Transverse colon (tissue), 4 donors: ENCODE measurements at regions of chr18 and their contacts with region 1.

Region 1: GRCh38 chr18:57859314-57859713 is 56.2 kb upstream of the ATP8B1 start:
- DNase-seq: peak; percentile 39
- H3K4me3 ChIP-seq: no peak overlapping the region
- H3K27ac ChIP-seq: no peak overlapping the region
- H3K4me1 ChIP-seq: peaks cover 0 to 5% (median 3%) of the 10 kb centered on the region in 4 donors
- H3K27me3 ChIP-seq: no peaks in the 10 kb centered on the region
- CTCF ChIP-seq: peak; percentile 19 to 58 (median 48)
- EP300 ChIP-seq: no peak
- POLR2A ChIP-seq: no peak

Region 2: DNA sequence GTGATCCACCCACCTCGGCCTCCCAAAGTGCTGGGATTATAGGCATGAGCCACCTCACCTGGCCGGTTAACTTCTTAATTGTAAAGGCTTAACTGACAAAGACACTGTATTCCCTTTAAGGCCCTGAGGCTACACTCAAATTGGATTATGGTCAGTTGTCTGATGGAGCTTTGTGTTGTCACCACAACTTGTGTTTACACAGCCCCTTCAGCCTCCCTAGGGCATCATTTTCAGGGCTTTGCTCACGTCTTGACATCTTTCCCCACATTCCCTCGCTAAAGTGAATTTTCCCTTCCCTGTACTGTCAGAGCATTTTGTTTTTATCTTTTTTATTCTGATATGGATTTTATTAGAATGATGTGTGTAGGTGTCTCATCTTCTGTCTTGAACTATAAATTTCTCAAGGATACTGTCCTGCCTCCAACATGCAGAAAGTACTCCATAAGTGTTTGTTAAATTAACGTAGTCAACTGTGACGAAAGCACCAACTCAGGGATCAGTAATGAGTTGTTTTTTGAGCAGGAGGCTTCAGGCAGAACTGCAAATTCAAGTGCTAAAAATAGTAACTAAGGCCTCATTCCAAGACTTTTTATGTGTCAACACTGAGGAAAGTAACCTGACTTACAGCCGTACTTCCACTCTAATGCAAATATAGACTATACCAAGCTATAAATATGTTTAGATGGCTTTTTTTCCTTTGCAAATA is 160.6 kb before region 1 on chr18:
- in situ Hi-C with region 1: loop called in 1 of 4 experiments (anchors 25 kb)
- intact Hi-C with region 1: no loop called
- DNase-seq: no peak
- H3K4me3 ChIP-seq: no peak overlapping the region
- H3K27ac ChIP-seq: peak overlapping the region in 1 of 4 donors; percentile 18
- H3K4me1 ChIP-seq: peaks cover 0 to 6% (median 0%) of the 10 kb centered on the region in 4 donors
- H3K27me3 ChIP-seq: no peaks in the 10 kb centered on the region
- CTCF ChIP-seq: no peak
- EP300 ChIP-seq: no peak
- POLR2A ChIP-seq: no peak